ENCODE measurements at regions of chr1 and their contacts with region 1.

Region 1: GRCh38 chr1:28518000-28518744 is 12.3 kb downstream of the RCC1 start:
- DNase-seq: peak; percentile 93
- ATAC-seq: peak; percentile 94
- H3K4me3 ChIP-seq: peak overlapping the region; percentile 53 to 68 (median 55)
- H3K4me3 Mint-ChIP-seq: peak overlapping the region; percentile 89
- H3K27ac ChIP-seq: peak overlapping the region in 1 of 2 donors; percentile 45
- H3K27ac Mint-ChIP-seq: peak overlapping the region; percentile 89
- H3K4me1 ChIP-seq: peaks cover 11 to 18% of the 10 kb centered on the region in 2 donors
- H3K4me1 Mint-ChIP-seq: peaks cover 30% of the 10 kb centered on the region
- H3K27me3 ChIP-seq: no peaks in the 10 kb centered on the region
- H3K27me3 Mint-ChIP-seq: no peaks in the 10 kb centered on the region
- CTCF ChIP-seq: peak; percentile 98

Region 2: DNA sequence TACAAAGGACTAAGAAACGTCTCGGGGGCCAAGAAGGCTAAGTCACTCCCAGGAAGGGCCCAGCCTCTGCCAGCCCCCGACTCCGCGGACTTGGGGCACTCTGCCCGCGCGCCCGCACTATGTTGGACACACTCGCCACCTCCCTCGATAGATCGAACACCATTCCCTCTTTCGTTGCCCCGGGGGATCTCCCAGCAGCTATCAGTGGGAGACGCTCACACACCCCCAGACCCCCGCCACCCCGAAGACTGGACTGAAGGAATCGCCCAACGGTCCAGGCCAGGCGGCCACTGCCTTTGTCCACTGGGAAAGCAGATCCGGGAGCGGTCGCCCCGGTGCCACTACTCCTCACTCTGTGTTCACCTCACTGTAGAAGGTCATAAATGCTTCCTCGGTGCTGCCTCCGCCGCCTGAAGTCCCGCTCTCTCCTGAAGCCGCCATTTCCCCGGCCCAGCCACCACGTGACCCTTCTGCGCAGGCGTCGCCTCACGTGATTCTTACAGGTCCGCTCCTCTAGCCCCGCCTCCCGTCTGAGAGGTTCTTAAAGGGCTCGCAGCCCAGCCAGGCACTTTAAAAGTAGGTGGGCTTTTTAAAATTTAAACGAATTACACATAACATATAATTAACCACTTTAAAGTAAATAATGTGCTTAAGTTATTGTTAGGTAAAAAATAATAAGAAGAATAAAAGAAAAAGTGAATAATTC is 285.5 kb before region 1 on chr1 and contains the start of gene DNAJC8:
- CTCF ChIA-PET with region 1: no interaction called
- POLR2A ChIA-PET with region 1: no interaction called
- intact Hi-C with region 1: no loop called
- DNase-seq: peak; percentile 95
- ATAC-seq: peak; percentile 54
- H3K4me3 ChIP-seq: peak within 1 kb of the TSS; percentile 64 to 100 (median 97)
- H3K4me3 Mint-ChIP-seq: peak within 1 kb of the TSS; percentile 99
- H3K27ac ChIP-seq: peak within 1 kb of the TSS; percentile 75 to 97
- H3K27ac Mint-ChIP-seq: peak within 1 kb of the TSS; percentile 98
- H3K4me1 ChIP-seq: peaks cover 16 to 40% of the 10 kb centered on the region in 2 donors
- H3K4me1 Mint-ChIP-seq: peaks cover 25% of the 10 kb centered on the region
- H3K27me3 ChIP-seq: no peaks in the 10 kb centered on the region
- H3K27me3 Mint-ChIP-seq: no peaks in the 10 kb centered on the region
- CTCF ChIP-seq: no peak
- total RNA-seq, gene DNAJC8: 74.6 and 79.0 TPM in 2 replicates

Region 3: GRCh38 chr1:28369371-28370238 is 148.6 kb before region 1 on chr1 and contains the start of gene PHACTR4:
- CTCF ChIA-PET with region 1: no interaction called
- POLR2A ChIA-PET with region 1: no interaction called
- intact Hi-C with region 1: loop called (anchors 5 kb)
- DNase-seq: peak; percentile 85
- ATAC-seq: peak; percentile 90
- H3K4me3 ChIP-seq: peak within 1 kb of the TSS; percentile 65 to 96 (median 88)
- H3K4me3 Mint-ChIP-seq: peak within 1 kb of the TSS; percentile 97
- H3K27ac ChIP-seq: peak within 1 kb of the TSS; percentile 75 to 81
- H3K27ac Mint-ChIP-seq: peak within 1 kb of the TSS; percentile 98
- H3K4me1 ChIP-seq: peaks cover 11 to 19% of the 10 kb centered on the region in 2 donors
- H3K4me1 Mint-ChIP-seq: peaks cover 26% of the 10 kb centered on the region
- H3K27me3 ChIP-seq: no peaks in the 10 kb centered on the region
- H3K27me3 Mint-ChIP-seq: no peaks in the 10 kb centered on the region
- CTCF ChIP-seq: no peak
- total RNA-seq, gene PHACTR4: 41.6 and 42.7 TPM in 2 replicates

Region 4: DNA sequence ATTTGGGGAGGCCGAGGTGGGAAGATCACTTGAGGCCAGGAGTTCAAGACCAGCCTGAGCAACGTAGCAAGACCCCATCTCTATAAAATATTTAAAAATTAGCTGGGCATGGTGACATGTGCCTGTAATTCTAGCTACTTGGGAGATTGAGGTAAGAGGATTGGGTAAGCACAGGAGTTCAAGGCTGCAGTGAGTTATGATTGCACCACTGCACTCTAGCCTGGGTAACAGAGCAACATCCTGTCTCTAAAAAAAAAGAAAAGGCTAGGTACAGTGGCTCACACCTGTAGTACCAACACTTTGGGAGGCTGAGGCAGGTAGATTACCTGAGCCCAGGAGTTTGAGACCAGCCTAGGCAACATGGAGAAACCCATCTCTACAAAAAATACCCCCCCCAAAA is 48.0 kb before region 1 on chr1:
- CTCF ChIA-PET with region 1: no interaction called
- POLR2A ChIA-PET with region 1: no interaction called
- intact Hi-C with region 1: no loop called
- DNase-seq: no peak
- ATAC-seq: no peak
- H3K4me3 ChIP-seq: no peak overlapping the region
- H3K4me3 Mint-ChIP-seq: no peak overlapping the region
- H3K27ac ChIP-seq: no peak overlapping the region
- H3K27ac Mint-ChIP-seq: no peak overlapping the region
- H3K4me1 ChIP-seq: no peaks in the 10 kb centered on the region
- H3K4me1 Mint-ChIP-seq: no peaks in the 10 kb centered on the region
- H3K27me3 ChIP-seq: no peaks in the 10 kb centered on the region
- H3K27me3 Mint-ChIP-seq: no peaks in the 10 kb centered on the region
- CTCF ChIP-seq: no peak

Region 5: DNA sequence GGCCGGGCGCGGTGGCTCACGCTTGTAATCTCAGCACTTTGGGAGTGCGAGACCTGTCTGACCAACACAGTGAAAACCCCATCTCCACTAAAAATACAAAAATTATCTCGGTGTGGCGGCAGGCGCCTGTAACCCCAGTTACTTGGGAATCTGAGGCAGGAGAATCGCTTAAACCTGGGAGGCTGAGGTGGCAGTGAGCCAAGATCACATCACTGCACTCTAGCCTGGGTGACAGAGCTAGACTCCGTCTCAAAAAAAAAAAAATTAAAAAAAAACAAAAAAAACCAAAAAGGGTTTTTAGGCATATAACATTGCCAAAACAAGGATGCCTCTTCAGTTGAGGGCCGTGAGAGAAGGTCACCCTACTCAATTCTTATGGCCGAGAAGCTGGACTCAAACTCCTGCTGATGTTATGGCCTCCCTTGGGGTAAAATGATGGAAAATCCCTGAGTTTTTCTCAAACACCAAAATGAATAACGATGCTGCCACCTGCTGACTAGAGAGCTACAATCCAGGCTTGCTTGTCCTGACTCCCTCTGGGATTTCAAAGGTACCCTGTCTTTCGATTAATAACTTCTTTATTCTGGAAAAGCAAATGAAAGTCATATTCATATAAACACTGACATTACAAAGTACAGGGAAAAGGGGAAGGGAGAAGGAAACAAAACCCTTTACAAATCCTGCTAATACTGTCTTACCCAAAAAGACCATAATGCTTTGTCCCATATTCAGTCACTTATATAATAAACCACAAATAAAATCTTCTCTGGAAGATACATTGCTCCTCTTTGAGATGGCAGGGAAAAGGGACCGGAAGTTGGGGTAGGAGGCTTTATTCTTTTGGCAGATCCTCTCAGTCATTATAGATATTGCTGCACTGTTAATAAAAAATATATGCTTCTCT is 84.6 kb after region 1 on chr1:
- CTCF ChIA-PET with region 1: interaction called, 49 read pairs
- POLR2A ChIA-PET with region 1: no interaction called
- intact Hi-C with region 1: loop called (anchors 1 kb)
- DNase-seq: peak; percentile 57
- ATAC-seq: peak; percentile 28
- H3K4me3 ChIP-seq: no peak overlapping the region
- H3K4me3 Mint-ChIP-seq: no peak overlapping the region
- H3K27ac ChIP-seq: no peak overlapping the region
- H3K27ac Mint-ChIP-seq: no peak overlapping the region
- H3K4me1 ChIP-seq: no peaks in the 10 kb centered on the region
- H3K4me1 Mint-ChIP-seq: no peaks in the 10 kb centered on the region
- H3K27me3 ChIP-seq: no peaks in the 10 kb centered on the region
- H3K27me3 Mint-ChIP-seq: no peaks in the 10 kb centered on the region
- CTCF ChIP-seq: peak; percentile 45